WTC11 (cell line): ENCODE measurements at regions of chr22 and their contacts with region 1.

Region 1: GRCh38 chr22:38766076-38766777 is 10.4 kb upstream of the SUN2 start:
- DNase-seq: peak; percentile 84
- ATAC-seq: peak; percentile 90
- H3K4me3 Mint-ChIP-seq: no peak overlapping the region
- H3K27ac Mint-ChIP-seq: no peak overlapping the region
- H3K4me1 Mint-ChIP-seq: 0 out of 2 replicates have a peak, but pooled peaks cover 1% of the 10 kb centered on the region
- H3K27me3 Mint-ChIP-seq: no peaks in the 10 kb centered on the region
- CTCF ChIP-seq: peak; percentile 66

Region 2: GRCh38 chr22:38172832-38173638 is 593.2 kb before region 1 on chr22:
- CTCF ChIA-PET with region 1: no interaction called
- POLR2A ChIA-PET with region 1: no interaction called
- DNase-seq: no peak
- ATAC-seq: no peak
- H3K4me3 Mint-ChIP-seq: no peak overlapping the region
- H3K27ac Mint-ChIP-seq: peak overlapping the region; percentile 82
- H3K4me1 Mint-ChIP-seq: peaks cover 12% of the 10 kb centered on the region
- H3K27me3 Mint-ChIP-seq: no peaks in the 10 kb centered on the region
- CTCF ChIP-seq: no peak

Region 3: DNA sequence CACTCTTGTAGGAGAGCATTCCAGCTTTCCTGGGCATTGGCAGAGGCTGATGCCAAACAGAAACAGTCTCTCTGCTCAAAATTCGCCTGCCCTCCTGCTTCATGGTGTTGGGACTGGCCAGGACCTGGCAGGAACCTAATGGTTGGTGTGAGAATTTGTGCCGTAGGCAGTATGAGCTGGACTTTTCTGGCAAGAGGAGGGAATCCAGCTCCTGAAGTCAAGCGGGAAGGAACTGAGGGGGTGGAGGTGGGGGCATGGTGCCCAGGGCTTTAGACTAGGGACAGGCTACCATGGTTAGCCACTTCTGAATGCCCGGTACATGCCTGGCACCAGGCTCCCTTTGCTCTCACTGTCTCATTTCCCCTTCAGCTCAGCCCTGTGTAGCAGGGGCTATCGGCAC is 91.3 kb before region 1 on chr22:
- CTCF ChIA-PET with region 1: no interaction called
- POLR2A ChIA-PET with region 1: no interaction called
- DNase-seq: no peak
- ATAC-seq: no peak
- H3K4me3 Mint-ChIP-seq: no peak overlapping the region
- H3K27ac Mint-ChIP-seq: no peak overlapping the region
- H3K4me1 Mint-ChIP-seq: no peaks in the 10 kb centered on the region
- H3K27me3 Mint-ChIP-seq: no peaks in the 10 kb centered on the region
- CTCF ChIP-seq: no peak

Region 4: DNA sequence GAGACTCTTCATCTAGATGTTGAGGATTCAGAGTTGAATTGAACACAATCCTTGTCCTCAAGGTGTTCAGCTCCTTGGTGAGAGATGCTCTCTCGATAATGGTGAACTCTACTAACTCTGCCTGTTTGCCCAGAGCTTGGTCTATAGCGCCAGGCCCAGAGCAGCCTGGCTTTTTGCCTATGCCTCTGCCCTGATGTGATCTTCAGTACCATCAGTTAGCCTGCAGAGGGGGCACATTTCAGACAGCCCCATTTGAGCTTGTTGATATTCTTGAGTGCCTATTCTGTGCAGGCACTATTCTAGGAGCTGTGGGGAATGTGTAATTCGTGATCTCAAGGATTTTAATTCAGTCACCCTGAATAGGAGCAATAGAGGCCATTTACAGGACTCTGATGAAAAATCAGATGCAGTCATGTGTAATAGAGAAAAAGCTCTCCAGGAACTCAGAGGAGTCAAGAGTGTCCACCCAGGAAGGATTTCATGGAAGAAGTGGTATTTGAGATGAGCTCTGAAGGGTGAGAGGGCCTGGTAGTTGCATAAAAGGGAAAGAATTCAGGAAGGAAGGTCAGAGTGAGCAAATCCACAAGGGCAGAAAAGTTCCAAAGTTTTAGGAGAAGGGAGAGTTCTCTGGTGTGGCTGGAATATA is 41.2 kb before region 1 on chr22:
- CTCF ChIA-PET with region 1: interaction called, 22 read pairs
- POLR2A ChIA-PET with region 1: no interaction called
- DNase-seq: no peak
- ATAC-seq: peak; percentile 96
- H3K4me3 Mint-ChIP-seq: no peak overlapping the region
- H3K27ac Mint-ChIP-seq: no peak overlapping the region; the same call in 1 of the 2 replicates
- H3K4me1 Mint-ChIP-seq: no peaks in the 10 kb centered on the region
- H3K27me3 Mint-ChIP-seq: no peaks in the 10 kb centered on the region
- CTCF ChIP-seq: peak; percentile 25; the same call in 1 of the 2 replicates

Region 5: GRCh38 chr22:38755911-38756532 is 10.2 kb before region 1 on chr22 and contains the start of gene SUN2:
- CTCF ChIA-PET with region 1: interaction called, 17 read pairs
- POLR2A ChIA-PET with region 1: no interaction called
- DNase-seq: peak; percentile 80
- ATAC-seq: peak; percentile 80
- H3K4me3 Mint-ChIP-seq: peak within 1 kb of the TSS; percentile 75
- H3K27ac Mint-ChIP-seq: peak within 1 kb of the TSS; percentile 64
- H3K4me1 Mint-ChIP-seq: peaks cover 19% of the 10 kb centered on the region
- H3K27me3 Mint-ChIP-seq: peaks cover 11% of the 10 kb centered on the region
- CTCF ChIP-seq: no peak
- total RNA-seq, gene SUN2: 17.7 to 30.1 TPM (median 18.6 TPM) in 3 replicates

Region 6: DNA sequence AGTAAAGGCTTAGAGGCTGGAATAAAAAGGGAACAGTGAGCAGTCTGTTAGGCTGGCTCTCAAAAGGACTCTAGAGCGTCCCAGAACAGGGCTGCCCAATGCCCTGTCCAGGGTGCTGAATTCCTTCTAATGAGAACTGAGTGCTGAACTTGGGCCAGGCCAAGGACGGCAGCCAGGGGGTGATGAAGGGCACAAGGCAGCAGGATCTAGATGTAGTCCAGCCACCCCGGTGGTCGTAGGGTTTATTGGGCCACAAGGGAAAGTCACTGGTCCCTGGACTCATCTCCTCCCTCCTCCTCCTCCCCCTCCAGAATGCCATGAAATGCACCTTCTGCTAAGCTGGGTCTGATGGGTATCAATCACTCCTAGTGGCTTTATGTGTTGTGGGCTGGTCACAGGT is 58.4 kb after region 1 on chr22:
- CTCF ChIA-PET with region 1: interaction called, 31 read pairs
- POLR2A ChIA-PET with region 1: no interaction called
- DNase-seq: peak; percentile 89
- ATAC-seq: peak; percentile 99
- H3K4me3 Mint-ChIP-seq: no peak overlapping the region
- H3K27ac Mint-ChIP-seq: no peak overlapping the region
- H3K4me1 Mint-ChIP-seq: peaks cover 3% of the 10 kb centered on the region; the same call in 1 of the 2 replicates
- H3K27me3 Mint-ChIP-seq: peaks cover under 1% of the 10 kb centered on the region
- CTCF ChIP-seq: no peak

Region 7: GRCh38 chr22:38850941-38851849 is 85.0 kb after region 1 on chr22:
- CTCF ChIA-PET with region 1: interaction called, 47 read pairs
- POLR2A ChIA-PET with region 1: no interaction called
- DNase-seq: no peak
- ATAC-seq: no peak
- H3K4me3 Mint-ChIP-seq: no peak overlapping the region
- H3K27ac Mint-ChIP-seq: no peak overlapping the region
- H3K4me1 Mint-ChIP-seq: no peaks in the 10 kb centered on the region
- H3K27me3 Mint-ChIP-seq: peaks cover 29% of the 10 kb centered on the region
- CTCF ChIP-seq: no peak

Region 8: GRCh38 chr22:38927033-38927781 is 161.0 kb after region 1 on chr22:
- CTCF ChIA-PET with region 1: interaction called, 10 read pairs
- POLR2A ChIA-PET with region 1: no interaction called
- DNase-seq: peak; percentile 85
- ATAC-seq: peak; percentile 94
- H3K4me3 Mint-ChIP-seq: peak overlapping the region; percentile 45
- H3K27ac Mint-ChIP-seq: no peak overlapping the region
- H3K4me1 Mint-ChIP-seq: peaks cover 9% of the 10 kb centered on the region
- H3K27me3 Mint-ChIP-seq: no peaks in the 10 kb centered on the region; the same call in 1 of the 2 replicates
- CTCF ChIP-seq: peak; percentile 59

Region 9: DNA sequence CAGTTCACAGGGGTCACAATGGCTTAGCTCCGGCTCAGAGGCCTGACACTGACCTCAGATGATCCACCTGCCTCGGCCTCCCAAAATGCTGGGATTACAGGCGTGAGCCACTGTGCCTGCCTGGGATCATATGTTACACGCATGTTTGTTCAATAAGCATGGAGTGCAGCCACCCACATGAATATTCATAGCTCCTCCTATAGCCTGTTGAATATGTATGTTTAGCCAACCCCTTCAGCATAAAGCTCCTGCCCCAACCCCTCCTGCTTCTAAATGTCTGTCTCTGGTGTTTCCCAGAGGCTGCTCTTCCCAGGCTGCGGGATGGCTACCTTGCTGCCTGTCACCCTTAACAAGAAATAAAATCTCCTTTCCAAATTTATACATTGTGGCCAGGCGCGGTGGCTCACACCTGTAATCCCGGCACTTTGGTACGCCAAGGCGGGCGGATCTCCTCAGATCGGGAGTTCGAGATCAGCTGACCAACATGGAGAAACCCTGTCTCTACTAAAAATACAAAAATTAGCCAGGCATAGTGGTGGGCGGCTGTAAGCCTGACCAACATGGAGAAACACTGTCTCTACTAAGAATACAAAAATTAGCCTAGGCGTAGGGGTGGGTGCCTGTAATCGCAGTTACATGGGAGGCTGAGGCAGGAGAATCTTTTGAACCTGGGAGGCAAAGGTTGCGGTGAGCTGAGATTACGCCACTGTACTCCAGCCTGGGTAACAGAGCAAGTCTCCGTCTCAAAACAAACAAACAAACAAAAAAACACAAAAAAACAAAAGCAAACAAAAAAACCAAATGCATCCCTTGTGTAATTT is 273.3 kb after region 1 on chr22:
- CTCF ChIA-PET with region 1: no interaction called
- POLR2A ChIA-PET with region 1: no interaction called
- DNase-seq: no peak
- ATAC-seq: no peak
- H3K4me3 Mint-ChIP-seq: peak overlapping the region; percentile 78
- H3K27ac Mint-ChIP-seq: peak overlapping the region; percentile 97
- H3K4me1 Mint-ChIP-seq: peaks cover 59% of the 10 kb centered on the region
- H3K27me3 Mint-ChIP-seq: no peaks in the 10 kb centered on the region; the same call in 1 of the 2 replicates
- CTCF ChIP-seq: no peak

Region 10: GRCh38 chr22:39123751-39124601 is 357.7 kb after region 1 on chr22:
- CTCF ChIA-PET with region 1: interaction called, 16 read pairs
- POLR2A ChIA-PET with region 1: no interaction called
- DNase-seq: peak; percentile 50
- ATAC-seq: peak; percentile 84
- H3K4me3 Mint-ChIP-seq: peak overlapping the region; percentile 36
- H3K27ac Mint-ChIP-seq: no peak overlapping the region
- H3K4me1 Mint-ChIP-seq: peaks cover 6% of the 10 kb centered on the region
- H3K27me3 Mint-ChIP-seq: no peaks in the 10 kb centered on the region
- CTCF ChIP-seq: no peak